ENCODE measurements at regions of chr12 and their contacts with region 1.

Region 1: DNA sequence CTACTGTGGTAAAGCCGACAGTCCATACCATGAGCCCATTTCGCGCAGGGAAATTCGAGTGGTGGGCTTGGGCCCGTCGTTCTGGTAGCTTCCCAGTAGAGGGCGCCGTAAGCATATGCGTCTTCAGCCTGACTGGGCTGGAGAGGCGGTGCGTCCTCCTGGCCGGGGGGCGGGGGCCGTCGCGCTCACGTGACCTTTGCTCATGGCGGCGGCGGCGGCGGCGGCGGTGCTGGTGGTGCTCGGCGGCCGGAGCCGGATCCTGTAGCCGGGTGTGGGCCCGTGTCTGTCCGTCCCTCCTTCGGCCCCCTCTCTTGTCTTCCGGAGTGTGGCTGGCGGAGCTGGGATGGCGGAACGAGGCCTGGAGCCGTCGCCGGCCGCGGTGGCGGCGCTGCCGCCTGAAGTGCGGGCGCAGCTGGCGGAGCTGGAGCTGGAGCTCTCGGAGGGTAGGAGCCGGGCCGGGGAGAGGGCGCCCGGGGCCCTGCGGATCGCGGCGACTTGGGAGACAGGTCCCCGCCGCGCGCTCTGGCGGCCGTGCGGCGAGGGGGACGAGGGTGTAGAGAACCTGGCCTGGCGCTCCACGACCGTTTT is at the start of gene DIP2B:
- DNase-seq: peak; percentile 98
- H3K4me3 ChIP-seq: peak within 1 kb of the TSS; percentile 85 to 99 (median 93)
- H3K27ac ChIP-seq: peak within 1 kb of the TSS; percentile 94 to 98 (median 98)
- H3K4me1 ChIP-seq: peaks cover 40 to 49% (median 48%) of the 10 kb centered on the region in 4 donors
- H3K27me3 ChIP-seq: no peaks in the 10 kb centered on the region
- CTCF ChIP-seq: peak; percentile 82 to 98 (median 95)
- EP300 ChIP-seq: no peak
- POLR2A ChIP-seq: no peak
- total RNA-seq, gene DIP2B: 18.7 to 23.0 (median 20.6) TPM

Region 2: DNA sequence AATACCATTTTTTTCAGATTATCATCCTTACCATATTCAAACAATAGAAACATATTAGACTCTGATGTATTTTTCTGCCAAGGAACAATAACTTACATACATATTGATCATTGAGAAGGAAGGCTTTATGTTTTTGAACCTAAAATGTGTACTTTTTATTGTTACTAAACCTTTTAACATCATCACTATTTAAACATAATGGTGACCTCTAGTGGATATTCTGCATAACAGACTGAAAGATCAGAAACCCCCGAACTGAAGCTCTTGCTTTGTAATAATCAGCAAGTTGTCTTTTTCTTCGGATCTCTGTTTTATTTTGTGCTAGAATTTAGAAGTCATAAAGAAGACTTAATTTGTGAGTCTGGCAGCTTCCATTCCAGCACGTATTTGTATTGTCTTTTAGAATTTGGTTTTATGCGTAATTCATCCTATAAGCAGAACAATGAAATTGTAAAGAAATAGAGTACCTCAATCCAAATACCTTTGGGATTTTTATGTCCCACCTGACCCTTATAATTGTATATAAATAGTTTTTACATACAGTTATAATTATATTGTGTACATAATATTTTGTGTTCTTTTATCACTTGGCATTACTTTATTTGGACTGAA is 133.1 kb after region 1 on chr12:
- intact Hi-C with region 1: loop called (anchors 1 kb)
- DNase-seq: no peak
- H3K4me3 ChIP-seq: no peak overlapping the region
- H3K27ac ChIP-seq: peak overlapping the region in 1 of 4 donors; percentile 12
- H3K4me1 ChIP-seq: peaks cover 5 to 27% (median 14%) of the 10 kb centered on the region in 4 donors
- H3K27me3 ChIP-seq: no peaks in the 10 kb centered on the region
- CTCF ChIP-seq: peak; percentile 66 to 74 (median 70)
- EP300 ChIP-seq: no peak
- POLR2A ChIP-seq: no peak

Region 3: DNA sequence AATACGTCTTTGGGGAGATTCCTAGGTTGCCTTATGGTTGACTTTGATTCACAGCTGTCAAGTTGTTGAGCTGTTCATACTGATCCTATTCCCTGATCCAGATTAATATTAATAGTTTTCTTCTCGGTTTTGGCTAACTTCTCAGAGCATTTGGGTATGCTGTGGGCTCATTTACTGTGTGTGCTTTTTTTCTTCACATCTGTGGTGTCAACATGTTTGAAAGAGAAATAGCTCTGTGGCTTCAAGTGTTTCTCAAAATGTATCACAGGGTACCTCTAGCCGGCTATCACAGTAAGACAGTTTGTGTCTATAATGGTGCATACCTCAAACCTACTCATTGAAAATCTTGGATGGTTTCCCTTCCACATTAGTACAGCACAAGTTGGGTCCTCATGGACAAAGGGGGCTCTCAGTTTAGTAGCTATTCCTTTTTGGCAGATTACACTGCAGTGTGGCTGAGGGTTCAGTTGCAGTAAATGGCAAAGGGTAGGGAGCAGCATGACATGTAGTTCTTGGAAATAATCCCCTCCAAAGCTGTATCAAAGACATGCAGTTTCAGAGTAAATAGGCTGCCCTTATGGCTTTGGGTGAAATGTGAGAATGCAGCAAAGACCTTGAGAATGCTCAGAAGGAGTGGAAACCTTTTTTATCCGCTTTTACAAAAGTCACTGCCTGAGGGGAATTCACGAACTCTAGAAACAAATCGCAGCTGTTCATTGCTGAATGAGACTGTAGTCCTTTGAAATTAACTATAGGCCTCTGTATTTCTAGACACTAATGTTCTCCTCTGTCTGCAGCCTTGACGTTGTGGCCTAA is 156.6 kb after region 1 on chr12:
- intact Hi-C with region 1: no loop called
- DNase-seq: no peak
- H3K4me3 ChIP-seq: no peak overlapping the region
- H3K27ac ChIP-seq: no peak overlapping the region
- H3K4me1 ChIP-seq: peaks cover 0 to 18% (median 6%) of the 10 kb centered on the region in 4 donors
- H3K27me3 ChIP-seq: no peaks in the 10 kb centered on the region
- CTCF ChIP-seq: no peak
- EP300 ChIP-seq: no peak
- POLR2A ChIP-seq: no peak

Region 4: GRCh38 chr12:50715174-50715573 is 210.3 kb after region 1 on chr12:
- intact Hi-C with region 1: loop called (anchors 10 kb)
- DNase-seq: no peak
- H3K4me3 ChIP-seq: no peak overlapping the region
- H3K27ac ChIP-seq: peak overlapping the region in 1 of 4 donors; percentile 4
- H3K4me1 ChIP-seq: peaks cover 5 to 23% (median 17%) of the 10 kb centered on the region in 4 donors
- H3K27me3 ChIP-seq: no peaks in the 10 kb centered on the region
- CTCF ChIP-seq: no peak
- EP300 ChIP-seq: no peak
- POLR2A ChIP-seq: no peak